ENCODE measurements at regions of chr6 and their contacts with region 1.

Region 1: DNA sequence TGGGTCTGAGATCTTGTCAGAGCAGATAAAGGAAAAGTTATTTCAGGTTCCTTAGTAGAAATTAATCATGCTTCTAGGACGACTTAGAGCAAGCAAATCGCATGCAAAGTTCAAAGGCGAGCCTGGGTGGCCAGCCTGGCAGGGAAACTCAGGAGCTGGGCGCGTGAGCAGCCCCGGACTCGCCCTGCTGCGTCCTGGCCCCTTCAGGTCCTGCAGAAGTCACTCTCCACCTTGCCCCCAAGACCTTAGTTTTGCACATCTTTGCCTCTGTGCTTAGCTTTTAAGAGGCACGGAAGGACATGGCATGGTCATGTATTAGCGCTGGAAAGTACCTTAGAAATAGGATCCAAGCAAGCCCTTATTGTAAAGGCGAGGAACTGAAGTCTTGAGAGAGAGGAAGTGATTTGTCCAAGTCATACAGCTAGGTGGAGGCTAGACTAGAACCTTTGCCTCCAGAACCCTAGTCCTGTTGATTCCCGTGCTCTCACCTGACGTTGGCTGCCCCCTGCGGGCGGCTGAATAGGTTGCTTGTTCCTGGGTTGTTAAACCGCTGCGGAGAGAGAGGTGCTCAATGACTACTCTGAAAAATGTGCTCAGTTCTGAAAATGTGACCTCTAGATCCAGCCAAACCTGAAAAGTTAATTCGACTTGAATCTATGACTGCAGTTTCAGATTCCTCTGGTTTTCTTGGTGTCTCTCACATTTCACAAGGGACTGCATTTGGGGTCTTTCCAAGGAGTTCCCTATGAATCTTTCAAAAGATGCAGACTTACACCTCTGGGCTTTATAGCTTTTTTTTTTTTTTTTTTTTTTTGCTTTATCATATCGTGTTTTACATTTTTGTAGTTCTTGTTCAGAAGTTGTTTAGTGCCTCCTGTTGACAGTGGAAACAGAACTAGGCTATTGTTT is 2.7 kb downstream of the MYB start:
- DNase-seq: peak; percentile 57 to 81 (median 76)
- ATAC-seq: peak; percentile 68
- H3K4me3 ChIP-seq: peak overlapping the region; percentile 56
- H3K4me3 Mint-ChIP-seq: peak overlapping the region; percentile 85 to 98 (median 90)
- H3K27ac ChIP-seq: peak overlapping the region; percentile 74
- H3K27ac Mint-ChIP-seq: peak overlapping the region; percentile 38 to 96 (median 86)
- H3K4me1 ChIP-seq: peaks cover 0 to 4% of the 10 kb centered on the region in 2 donors
- H3K4me1 Mint-ChIP-seq: peaks cover 16 to 42% (median 22%) of the 10 kb centered on the region in 7 donors
- H3K27me3 ChIP-seq: no peaks in the 10 kb centered on the region
- H3K27me3 Mint-ChIP-seq: no peaks in the 10 kb centered on the region

Region 2: DNA sequence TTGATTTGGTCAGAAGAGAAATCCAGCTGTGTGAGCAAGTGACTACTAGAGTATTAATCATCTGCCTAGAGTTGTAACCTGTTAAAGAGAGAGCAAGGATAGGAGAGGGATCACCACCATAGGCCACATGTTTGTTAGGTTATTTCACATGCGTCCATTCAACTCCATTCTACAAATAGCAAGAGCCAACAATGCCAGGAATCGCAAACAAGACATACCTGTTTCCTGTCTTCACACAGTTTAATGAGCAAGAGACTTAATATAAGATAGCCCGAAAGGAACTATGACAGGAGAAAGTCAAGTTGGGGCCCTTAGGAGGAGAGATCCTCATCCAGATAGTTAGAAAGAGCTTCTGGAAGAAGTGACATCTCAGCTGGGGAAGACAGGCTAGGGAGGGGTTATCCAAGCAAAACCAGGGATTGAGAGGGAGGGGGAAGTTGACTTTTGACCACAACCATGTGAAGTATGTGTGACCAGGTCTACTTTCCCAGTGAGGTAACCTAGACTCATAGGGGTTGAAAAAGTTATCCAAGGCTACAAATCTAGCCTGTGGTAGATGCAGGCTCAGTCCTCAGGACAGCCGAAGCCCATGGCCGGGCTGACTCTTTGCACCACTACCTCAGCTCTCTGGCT is 381.2 kb before region 1 on chr6:
- CTCF ChIA-PET with region 1: no interaction called
- POLR2A ChIA-PET with region 1: no interaction called
- intact Hi-C with region 1: no loop called
- DNase-seq: no peak
- ATAC-seq: no peak
- H3K4me3 ChIP-seq: no peak overlapping the region
- H3K4me3 Mint-ChIP-seq: no peak overlapping the region
- H3K27ac ChIP-seq: no peak overlapping the region
- H3K27ac Mint-ChIP-seq: no peak overlapping the region
- H3K4me1 ChIP-seq: no peaks in the 10 kb centered on the region
- H3K4me1 Mint-ChIP-seq: peaks cover 0 to 3% (median 0%) of the 10 kb centered on the region in 7 donors
- H3K27me3 ChIP-seq: no peaks in the 10 kb centered on the region
- H3K27me3 Mint-ChIP-seq: peaks cover 0 to 18% (median 3%) of the 10 kb centered on the region in 5 donors

Region 3: DNA sequence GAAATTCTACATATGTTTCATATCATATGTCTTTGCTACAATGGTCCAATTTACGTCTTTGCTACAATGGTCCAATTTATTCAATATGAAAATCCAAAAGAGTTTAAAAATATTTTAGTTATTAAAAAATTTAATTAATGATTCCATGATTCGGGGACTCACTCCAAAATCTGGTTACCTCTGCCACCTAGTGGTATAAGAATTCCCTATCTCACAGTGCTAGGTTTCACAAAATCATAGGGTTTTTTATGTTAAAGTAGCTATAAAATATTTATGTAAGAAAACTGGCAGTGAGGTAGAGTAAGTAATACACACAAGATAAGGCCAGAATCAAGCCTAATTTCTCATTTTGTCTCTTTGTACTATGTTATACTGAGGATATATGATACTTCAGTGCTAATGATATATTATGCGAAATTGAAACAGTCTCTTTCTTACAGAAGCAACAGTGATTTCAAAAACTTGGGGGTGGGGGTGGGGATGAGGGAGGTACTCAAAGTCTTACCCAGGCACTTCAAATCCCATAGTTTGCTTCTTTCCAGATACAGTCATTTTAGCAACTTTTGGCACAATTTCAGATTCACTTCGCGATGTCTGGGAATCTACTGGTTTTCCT is 181.4 kb before region 1 on chr6:
- CTCF ChIA-PET with region 1: interaction called, 4 read pairs
- POLR2A ChIA-PET with region 1: interaction called, 4 read pairs
- intact Hi-C with region 1: loop called in 1 of 2 experiments (anchors 1 kb)
- DNase-seq: peak in 4 of 9 donors; percentile 18 to 28 (median 24)
- ATAC-seq: peak; percentile 54
- H3K4me3 ChIP-seq: no peak overlapping the region
- H3K4me3 Mint-ChIP-seq: no peak overlapping the region
- H3K27ac ChIP-seq: no peak overlapping the region
- H3K27ac Mint-ChIP-seq: no peak overlapping the region
- H3K4me1 ChIP-seq: peaks cover 0 to 8% of the 10 kb centered on the region in 2 donors
- H3K4me1 Mint-ChIP-seq: peaks cover under 1 to 19% (median 15%) of the 10 kb centered on the region in 7 donors
- H3K27me3 ChIP-seq: no peaks in the 10 kb centered on the region
- H3K27me3 Mint-ChIP-seq: no peaks in the 10 kb centered on the region

Region 4: DNA sequence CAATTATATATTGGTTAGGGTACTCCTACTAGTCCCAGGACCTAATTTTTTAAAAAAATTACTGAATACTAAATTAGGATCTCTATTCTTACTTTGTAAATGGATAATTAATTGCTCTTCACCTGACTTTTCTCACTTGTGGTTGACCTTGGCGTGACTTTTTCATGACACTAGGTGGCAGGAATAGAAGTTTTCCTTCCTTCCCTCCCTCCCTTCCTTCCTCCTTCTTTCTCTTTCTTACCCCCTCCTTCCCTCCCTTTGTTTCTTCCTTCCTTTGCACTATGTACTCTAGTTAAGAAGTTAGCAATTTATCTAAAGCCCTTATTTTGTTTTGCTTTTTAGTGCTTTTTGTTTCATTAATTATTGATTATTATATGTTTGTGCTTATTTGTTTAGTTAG is 108.8 kb before region 1 on chr6:
- CTCF ChIA-PET with region 1: no interaction called
- POLR2A ChIA-PET with region 1: interaction called, 3 read pairs
- intact Hi-C with region 1: loop called in 1 of 2 experiments (anchors 1 kb)
- DNase-seq: no peak
- ATAC-seq: no peak
- H3K4me3 ChIP-seq: no peak overlapping the region
- H3K4me3 Mint-ChIP-seq: peak overlapping the region in 1 of 10 donors; percentile 28
- H3K27ac ChIP-seq: no peak overlapping the region
- H3K27ac Mint-ChIP-seq: peak overlapping the region in 1 of 9 donors; percentile 9
- H3K4me1 ChIP-seq: peaks cover 0 to 3% of the 10 kb centered on the region in 2 donors
- H3K4me1 Mint-ChIP-seq: peaks cover 5 to 24% (median 19%) of the 10 kb centered on the region in 7 donors
- H3K27me3 ChIP-seq: no peaks in the 10 kb centered on the region
- H3K27me3 Mint-ChIP-seq: no peaks in the 10 kb centered on the region

Region 5: GRCh38 chr6:135114355-135115145 is 69.2 kb before region 1 on chr6:
- CTCF ChIA-PET with region 1: interaction called, 8 read pairs
- POLR2A ChIA-PET with region 1: interaction called, 3 read pairs
- intact Hi-C with region 1: loop called (anchors 1 kb)
- DNase-seq: no peak
- ATAC-seq: no peak
- H3K4me3 ChIP-seq: no peak overlapping the region
- H3K4me3 Mint-ChIP-seq: peak overlapping the region in 8 of 10 donors; percentile 7 to 83 (median 36)
- H3K27ac ChIP-seq: no peak overlapping the region
- H3K27ac Mint-ChIP-seq: peak overlapping the region in 7 of 9 donors; percentile 6 to 92 (median 49)
- H3K4me1 ChIP-seq: peaks cover 19 to 42% of the 10 kb centered on the region in 2 donors
- H3K4me1 Mint-ChIP-seq: peaks cover 26 to 88% (median 76%) of the 10 kb centered on the region in 7 donors
- H3K27me3 ChIP-seq: no peaks in the 10 kb centered on the region
- H3K27me3 Mint-ChIP-seq: peaks cover 0 to 7% (median 0%) of the 10 kb centered on the region in 5 donors

Region 6: DNA sequence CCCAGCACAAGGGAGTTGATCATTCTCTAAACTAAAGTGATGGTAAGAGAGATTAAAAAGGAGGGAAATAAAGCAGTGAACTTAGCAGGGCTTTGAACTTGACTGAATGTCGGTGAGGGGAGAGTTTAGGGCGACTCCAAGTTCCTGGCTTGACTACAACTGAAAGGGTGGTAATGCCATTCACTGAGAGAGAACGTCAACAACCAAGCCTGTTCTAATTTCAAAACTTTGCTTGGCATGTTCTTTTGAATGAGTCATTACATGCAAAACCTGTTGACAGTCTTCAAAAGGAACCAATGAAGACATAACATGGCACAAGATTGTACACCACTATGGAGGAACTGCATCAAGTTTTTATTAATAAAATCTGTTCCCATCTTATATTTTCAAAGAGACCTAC is 12.9 kb before region 1 on chr6:
- CTCF ChIA-PET with region 1: interaction called, 4 read pairs
- POLR2A ChIA-PET with region 1: interaction called, 14 read pairs
- intact Hi-C with region 1: loop called (anchors 1 kb)
- DNase-seq: no peak
- ATAC-seq: no peak
- H3K4me3 ChIP-seq: no peak overlapping the region
- H3K4me3 Mint-ChIP-seq: peak overlapping the region in 1 of 10 donors; percentile 28
- H3K27ac ChIP-seq: no peak overlapping the region
- H3K27ac Mint-ChIP-seq: peak overlapping the region in 3 of 9 donors; percentile 31 to 80 (median 67)
- H3K4me1 ChIP-seq: no peaks in the 10 kb centered on the region
- H3K4me1 Mint-ChIP-seq: peaks cover 0 to 36% (median 5%) of the 10 kb centered on the region in 7 donors
- H3K27me3 ChIP-seq: no peaks in the 10 kb centered on the region
- H3K27me3 Mint-ChIP-seq: no peaks in the 10 kb centered on the region

Region 7: DNA sequence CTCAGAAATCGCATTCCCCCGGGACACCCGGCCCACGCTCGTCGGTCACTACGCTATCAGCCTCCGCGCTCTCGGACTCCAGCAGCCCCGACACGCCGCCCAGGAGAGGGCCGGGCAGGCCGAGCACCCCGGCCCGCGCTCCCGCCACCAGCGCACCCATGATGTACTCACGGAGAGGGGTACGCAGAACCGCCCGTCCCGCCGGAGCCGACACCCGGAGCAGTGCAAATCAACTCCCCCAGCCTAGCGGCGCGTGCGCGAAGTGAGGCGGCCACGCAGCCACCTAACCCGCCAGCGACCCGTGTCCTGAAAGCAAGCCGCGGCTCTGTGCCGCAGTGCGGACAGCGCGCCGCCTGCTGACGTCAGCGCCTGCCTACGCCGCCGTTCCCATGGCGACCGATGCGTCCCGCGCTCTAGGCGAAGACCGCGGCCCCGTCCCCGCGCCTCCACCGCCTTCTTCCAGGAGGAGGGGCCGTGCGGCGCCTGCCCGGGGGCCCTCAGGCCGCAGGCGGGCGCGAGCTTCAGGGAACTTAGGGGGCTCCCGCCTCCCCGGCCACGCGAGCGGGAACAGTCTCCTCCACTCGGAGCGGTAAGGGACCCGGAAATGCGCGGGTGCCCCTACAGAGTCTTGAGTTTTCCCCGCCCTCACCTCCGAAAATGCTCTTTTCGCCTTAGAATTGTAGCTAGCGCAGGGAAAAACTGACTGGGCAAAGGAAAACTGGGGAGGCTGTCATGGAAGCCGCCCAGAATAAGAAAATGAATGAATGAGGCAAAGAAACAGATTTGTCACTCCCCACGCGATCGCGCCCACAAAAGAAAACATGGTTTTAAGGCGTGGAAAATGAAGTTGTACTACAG is 313.9 kb after region 1 on chr6 and contains the start of gene AHI1:
- CTCF ChIA-PET with region 1: no interaction called
- POLR2A ChIA-PET with region 1: no interaction called
- intact Hi-C with region 1: loop called in 1 of 2 experiments (anchors 2 kb)
- DNase-seq: peak; percentile 65 to 94 (median 85)
- ATAC-seq: peak; percentile 89
- H3K4me3 ChIP-seq: peak within 1 kb of the TSS; percentile 64
- H3K4me3 Mint-ChIP-seq: peak within 1 kb of the TSS in 4 of 10 donors; percentile 32 to 53 (median 37)
- H3K27ac ChIP-seq: peak within 1 kb of the TSS; percentile 95
- H3K27ac Mint-ChIP-seq: no peak within 1 kb of the TSS
- H3K4me1 ChIP-seq: peaks cover 0 to 5% of the 10 kb centered on the region in 2 donors
- H3K4me1 Mint-ChIP-seq: peaks cover 4 to 19% (median 9%) of the 10 kb centered on the region in 7 donors
- H3K27me3 ChIP-seq: no peaks in the 10 kb centered on the region
- H3K27me3 Mint-ChIP-seq: peaks cover 0 to 3% (median 0%) of the 10 kb centered on the region in 5 donors
- total RNA-seq, gene AHI1: 12.5 to 31.3 (median 26.3) TPM